ENCODE measurements at regions of chr1 and their contacts with region 1.

Region 1: GRCh38 chr1:209565759-209566678 is 17.5 kb upstream of the CAMK1G start:
- H3K4me3 ChIP-seq: no peak overlapping the region
- H3K27ac ChIP-seq: no peak overlapping the region
- H3K4me1 ChIP-seq: no peaks in the 10 kb centered on the region
- CTCF ChIP-seq: peak; percentile 65; the same call in 1 of the 2 replicates

Region 2: DNA sequence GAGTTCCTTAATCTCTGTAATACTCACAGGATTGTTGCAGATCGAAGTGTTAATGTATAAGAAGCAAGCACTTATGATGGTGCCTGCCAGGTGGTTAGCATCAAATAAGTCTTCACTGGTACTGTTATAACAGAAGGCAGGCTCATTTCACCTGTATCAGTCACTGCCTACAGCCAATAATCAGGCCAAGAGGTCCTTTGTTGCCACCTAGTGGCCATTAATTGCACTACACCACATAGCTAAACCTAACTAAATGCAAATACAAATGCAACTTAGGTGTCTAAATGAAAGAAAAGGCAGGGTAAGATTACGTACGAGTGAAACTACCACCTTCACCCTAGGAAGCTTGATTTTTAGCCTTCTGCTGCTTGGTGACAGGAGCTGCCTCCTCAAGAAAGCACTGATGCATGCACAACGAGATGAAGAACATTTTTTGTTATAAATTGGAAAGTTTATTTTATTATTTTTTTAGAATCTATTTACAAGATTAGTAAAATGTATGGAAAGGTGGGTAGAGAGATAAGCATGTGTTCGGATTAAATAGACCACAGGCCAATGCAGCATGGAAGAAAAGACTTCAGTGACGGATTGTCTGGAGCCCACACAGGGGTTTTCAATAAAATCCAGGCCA is 317.3 kb before region 1 on chr1:
- CTCF ChIA-PET with region 1: interaction called, 12 read pairs
- POLR2A ChIA-PET with region 1: no interaction called
- H3K4me3 ChIP-seq: no peak overlapping the region
- H3K27ac ChIP-seq: no peak overlapping the region
- H3K4me1 ChIP-seq: no peaks in the 10 kb centered on the region
- CTCF ChIP-seq: peak; percentile 62

Region 3: GRCh38 chr1:209513226-209513625 is 52.8 kb before region 1 on chr1:
- CTCF ChIA-PET with region 1: interaction called, 29 read pairs
- POLR2A ChIA-PET with region 1: no interaction called
- H3K4me3 ChIP-seq: no peak overlapping the region
- H3K27ac ChIP-seq: no peak overlapping the region
- H3K4me1 ChIP-seq: no peaks in the 10 kb centered on the region
- CTCF ChIP-seq: peak; percentile 19; the same call in 1 of the 2 replicates

Region 4: GRCh38 chr1:209576798-209577197 is 10.8 kb after region 1 on chr1:
- CTCF ChIA-PET with region 1: interaction called, 29 read pairs
- POLR2A ChIA-PET with region 1: no interaction called
- H3K4me3 ChIP-seq: no peak overlapping the region
- H3K27ac ChIP-seq: no peak overlapping the region
- H3K4me1 ChIP-seq: no peaks in the 10 kb centered on the region
- CTCF ChIP-seq: peak; percentile 82

Region 5: DNA sequence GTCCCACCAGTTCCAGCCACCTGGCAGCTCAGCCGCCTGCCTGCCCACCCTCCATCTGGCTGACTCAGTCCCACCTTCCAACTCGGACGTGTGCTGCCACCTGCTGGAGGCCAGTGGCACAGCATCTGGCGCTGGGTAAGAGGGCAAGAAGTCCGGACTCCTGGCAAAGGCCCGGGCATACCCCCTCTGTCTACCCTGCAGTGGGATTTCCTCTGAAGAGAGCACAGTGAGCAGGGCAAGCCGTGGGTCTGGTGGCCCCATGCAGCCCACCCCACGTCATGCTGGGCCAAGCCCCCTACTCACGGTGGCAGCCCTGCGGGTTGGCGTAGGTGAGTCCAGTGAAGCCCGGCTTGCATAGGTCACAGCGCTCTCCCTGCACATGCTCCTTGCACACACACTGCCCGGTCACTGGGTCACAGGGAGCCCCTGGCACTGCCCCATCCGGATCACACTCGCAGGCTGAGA is 61.7 kb after region 1 on chr1:
- CTCF ChIA-PET with region 1: interaction called, 16 read pairs
- POLR2A ChIA-PET with region 1: no interaction called
- H3K4me3 ChIP-seq: no peak overlapping the region
- H3K27ac ChIP-seq: no peak overlapping the region
- H3K4me1 ChIP-seq: no peaks in the 10 kb centered on the region
- CTCF ChIP-seq: peak; percentile 90

Region 6: DNA sequence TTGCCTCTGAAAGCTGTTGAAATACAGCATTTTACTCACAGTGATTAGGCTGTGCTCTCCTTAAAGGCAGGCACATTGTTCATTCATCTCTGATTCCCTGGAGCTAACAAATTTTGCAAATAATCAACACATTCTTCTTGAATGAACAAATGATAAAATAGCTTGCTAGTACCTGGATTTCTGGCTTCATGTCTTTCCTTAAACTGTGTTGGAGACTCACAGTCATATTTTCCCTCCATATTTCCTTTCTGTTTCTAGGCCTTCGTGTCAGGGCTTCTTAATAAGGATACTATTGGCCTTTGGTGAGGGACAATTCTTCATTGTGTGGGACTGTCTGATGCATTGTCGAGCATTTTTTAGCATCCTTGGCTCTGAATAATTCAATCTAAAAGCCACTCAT is 148.3 kb after region 1 on chr1:
- CTCF ChIA-PET with region 1: no interaction called
- POLR2A ChIA-PET with region 1: no interaction called
- H3K4me3 ChIP-seq: no peak overlapping the region
- H3K27ac ChIP-seq: no peak overlapping the region
- H3K4me1 ChIP-seq: no peaks in the 10 kb centered on the region
- CTCF ChIP-seq: no peak

Region 7: DNA sequence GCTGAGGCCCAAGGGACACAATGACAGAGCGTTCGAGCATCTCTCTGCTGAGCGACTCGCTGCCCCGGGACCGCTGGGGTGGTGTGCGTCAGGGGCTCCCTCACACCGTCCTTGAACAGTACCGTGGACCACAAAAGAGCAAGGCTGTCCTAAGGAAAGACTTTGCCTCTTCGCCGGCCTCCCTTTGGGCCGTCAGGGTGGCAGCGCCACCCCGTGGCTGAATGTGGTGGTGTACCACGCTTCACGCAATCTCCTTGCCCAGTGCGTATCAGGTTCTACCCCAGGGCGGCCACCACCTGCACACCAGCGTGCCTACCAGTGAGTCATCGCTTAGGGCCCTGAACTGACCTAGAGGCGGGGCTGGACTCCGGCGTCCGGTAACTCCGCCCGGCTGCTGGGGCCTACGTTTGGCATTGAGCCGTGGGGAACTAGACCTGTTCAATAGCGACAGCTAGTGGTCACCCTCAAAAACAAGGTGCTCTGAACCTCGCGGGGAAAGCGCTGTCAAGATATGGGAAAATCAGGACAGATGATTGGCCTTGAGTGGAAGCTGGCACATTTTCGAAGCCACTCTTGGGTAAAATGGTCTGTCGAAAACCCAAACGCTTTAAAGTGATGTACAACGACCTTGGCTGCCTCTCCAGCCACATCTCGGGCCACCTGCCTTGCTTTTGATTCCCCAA is 181.7 kb after region 1 on chr1:
- CTCF ChIA-PET with region 1: interaction called, 15 read pairs
- POLR2A ChIA-PET with region 1: no interaction called
- H3K4me3 ChIP-seq: no peak overlapping the region
- H3K27ac ChIP-seq: no peak overlapping the region
- H3K4me1 ChIP-seq: peaks cover 6% of the 10 kb centered on the region; the same call in 1 of the 2 replicates
- CTCF ChIP-seq: peak; percentile 98